ENCODE measurements at regions of chr11 and their contacts with region 1.

Region 1: DNA sequence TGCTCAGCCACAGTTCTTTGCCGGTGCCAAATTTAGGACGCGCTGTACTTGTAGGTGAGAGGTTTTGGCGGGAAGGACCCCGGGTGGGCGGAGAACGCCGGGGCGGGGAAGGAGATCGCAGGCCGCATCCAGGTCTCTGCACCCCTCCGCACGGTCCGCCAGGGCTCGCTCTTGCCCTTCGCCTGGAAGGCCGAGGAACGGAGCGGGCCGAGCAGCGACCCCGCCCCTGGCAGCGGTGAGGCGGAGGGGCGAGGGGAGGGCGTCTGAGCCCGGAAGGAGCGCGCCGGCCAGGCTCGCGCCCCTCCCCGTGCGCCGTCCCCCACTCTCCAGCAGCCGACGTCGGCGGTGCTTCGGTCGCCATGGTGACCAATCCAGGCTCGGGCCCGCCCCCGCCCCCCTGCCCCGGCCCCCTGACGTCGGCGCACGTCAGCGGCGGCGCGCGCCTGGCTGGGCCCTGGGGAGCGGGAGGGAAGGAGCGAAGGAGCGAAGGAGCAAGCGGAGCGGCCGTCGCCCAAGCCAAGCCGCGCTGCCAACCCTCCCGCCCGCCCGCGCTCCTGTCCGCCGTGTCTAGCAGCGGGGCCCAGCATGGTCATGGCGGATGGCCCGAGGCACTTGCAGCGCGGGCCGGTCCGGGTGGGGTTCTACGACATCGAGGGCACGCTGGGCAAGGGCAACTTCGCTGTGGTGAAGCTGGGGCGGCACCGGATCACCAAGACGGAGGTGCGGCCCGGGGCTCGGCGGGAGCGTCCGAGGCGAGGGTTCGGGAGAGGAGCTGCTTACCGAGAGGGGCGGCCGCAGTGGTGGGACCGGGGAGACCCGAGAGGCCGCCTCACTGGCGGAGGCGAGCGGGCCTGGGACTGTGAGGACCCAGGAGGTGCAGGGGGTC is at the start of gene SIK2:
- DNase-seq: peak; percentile 86 to 99 (median 95)

Region 2: DNA sequence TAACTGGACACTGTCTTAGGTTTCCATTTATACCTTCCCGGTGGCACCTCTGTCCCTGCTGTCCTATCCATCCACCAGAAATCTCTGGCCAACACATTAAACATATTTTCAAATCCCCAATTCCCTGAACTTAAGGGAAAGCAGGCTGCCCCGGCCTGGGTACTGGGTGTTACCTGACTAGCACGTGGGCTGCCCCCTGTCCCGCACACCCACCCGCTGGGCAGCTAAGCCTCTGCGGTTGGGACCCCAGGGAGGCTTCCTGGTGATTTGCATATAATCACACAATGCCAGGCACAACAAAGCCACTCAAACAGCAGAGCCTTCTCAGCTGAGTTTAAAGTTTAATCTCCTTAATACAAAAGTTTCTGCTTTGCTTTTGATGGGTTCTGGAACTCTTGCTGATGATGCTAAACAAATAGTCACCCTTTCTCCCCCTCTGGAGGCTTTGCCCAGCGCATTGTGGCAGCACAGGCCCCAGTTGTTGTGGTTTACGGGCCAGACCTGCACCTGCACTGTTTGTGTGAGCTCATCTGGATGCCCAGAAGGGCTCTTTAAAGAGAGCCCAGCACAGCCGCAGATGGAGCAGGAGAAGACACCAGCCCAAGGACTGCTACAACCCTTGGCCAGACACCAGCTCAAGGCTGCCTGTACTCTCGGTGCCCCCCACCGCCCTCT is 163.2 kb before region 1 on chr11:
- intact Hi-C with region 1: no loop called
- DNase-seq: no peak

Region 3: GRCh38 chr11:111735262-111736116 is 133.3 kb after region 1 on chr11:
- intact Hi-C with region 1: loop called (anchors 1 kb)
- DNase-seq: peak in 9 of 10 donors; percentile 67 to 95 (median 76)

Region 4: DNA sequence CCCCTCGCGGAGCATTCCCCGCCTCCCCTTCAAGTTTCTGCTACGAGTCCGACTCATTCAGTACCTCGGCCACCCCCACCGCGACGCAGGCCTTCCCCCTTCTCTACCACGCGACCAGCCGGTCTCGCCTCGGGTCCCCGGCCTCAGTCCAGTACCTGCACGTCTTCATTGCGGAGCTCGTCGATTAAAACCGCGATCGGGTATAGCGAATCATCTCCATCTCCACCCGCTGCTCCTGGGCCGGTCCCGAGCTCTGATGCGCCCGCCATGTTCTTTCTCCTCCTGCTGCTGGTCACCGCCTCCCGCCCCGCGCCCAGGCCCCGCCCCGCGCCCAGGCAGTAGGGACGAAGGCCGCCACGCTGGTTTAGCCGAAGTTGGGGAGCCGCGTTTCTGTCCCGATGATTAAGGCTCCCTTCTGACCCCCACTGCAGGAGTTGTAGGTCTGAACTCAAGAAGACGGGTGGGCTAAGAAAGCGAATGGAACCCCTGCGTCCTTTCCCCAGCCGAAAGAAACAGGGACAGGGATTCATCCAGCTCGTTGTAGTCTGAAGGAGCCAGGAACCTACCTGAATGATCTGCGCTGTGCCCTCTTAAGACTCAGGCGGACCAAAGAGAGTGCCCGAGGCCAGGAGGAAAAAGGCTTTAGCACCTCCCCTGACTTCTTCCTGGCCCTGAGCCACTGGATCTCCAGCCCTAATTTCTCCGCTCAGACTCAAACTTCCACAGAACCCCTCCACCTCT is 164.0 kb after region 1 on chr11 and contains the start of gene PPP2R1B:
- intact Hi-C with region 1: loop called (anchors 1 kb)
- DNase-seq: peak; percentile 67 to 97 (median 82)

Region 5: GRCh38 chr11:111777094-111778046 is 175.1 kb after region 1 on chr11:
- intact Hi-C with region 1: loop called (anchors 1 kb)
- DNase-seq: peak in 2 of 10 donors; percentile 22 to 41